ENCODE measurements at regions of chr17 and their contacts with region 1.

Region 1: DNA sequence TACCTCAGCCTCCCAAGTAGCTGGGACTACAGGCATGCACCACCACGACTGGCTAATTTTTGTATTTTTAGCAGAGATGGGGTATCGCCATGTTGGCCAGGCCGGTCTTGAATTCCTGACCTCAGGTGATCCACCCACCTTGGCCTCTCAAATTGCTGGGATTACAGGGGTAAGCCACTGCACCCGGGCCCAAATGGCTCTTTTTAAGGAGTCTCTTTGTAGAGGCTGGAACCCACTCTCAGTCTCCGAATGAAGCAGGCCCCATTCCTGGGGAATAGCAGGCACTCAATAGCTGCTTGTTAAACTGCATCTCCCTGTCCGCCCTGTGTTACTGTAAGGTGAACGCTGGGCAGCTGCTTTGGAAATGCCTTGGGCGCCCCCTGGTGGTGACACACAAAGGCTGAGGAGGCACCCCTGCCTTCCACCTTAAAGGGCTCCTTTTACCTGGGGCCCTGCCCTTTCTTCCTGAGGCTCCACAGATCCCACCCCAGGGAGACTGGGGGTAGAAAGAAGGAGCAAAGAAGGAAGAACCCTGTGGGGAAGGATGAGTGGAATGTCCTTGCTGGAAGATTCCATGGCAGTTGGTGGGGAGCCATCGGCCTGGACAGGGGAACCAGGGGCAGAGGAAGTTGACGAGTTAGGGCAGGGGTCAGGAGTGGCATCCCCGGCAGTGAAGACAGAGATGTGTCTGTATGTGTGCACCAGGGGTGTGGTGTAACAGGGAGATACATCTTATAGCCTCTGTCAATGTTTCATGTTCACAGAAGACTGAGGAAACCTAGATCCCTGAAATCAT is 6.1 kb upstream of the SP2 start:
- DNase-seq: peak; percentile 84 to 88 (median 86)
- H3K4me3 ChIP-seq: no peak overlapping the region
- H3K4me3 Mint-ChIP-seq: peak overlapping the region in 1 of 8 donors; percentile 36
- H3K27ac ChIP-seq: no peak overlapping the region
- H3K27ac Mint-ChIP-seq: peak overlapping the region in 3 of 7 donors; percentile 41 to 64 (median 52)
- H3K4me1 ChIP-seq: peaks cover 19% of the 10 kb centered on the region
- H3K4me1 Mint-ChIP-seq: peaks cover 13 to 27% (median 20%) of the 10 kb centered on the region in 4 donors
- H3K27me3 ChIP-seq: no peaks in the 10 kb centered on the region
- H3K27me3 Mint-ChIP-seq: no peaks in the 10 kb centered on the region

Region 2: GRCh38 chr17:47388825-47389224 is 501.1 kb before region 1 on chr17:
- CTCF ChIA-PET with region 1: no interaction called
- POLR2A ChIA-PET with region 1: no interaction called
- intact Hi-C with region 1: no loop called
- DNase-seq: no peak
- H3K4me3 ChIP-seq: no peak overlapping the region
- H3K4me3 Mint-ChIP-seq: no peak overlapping the region
- H3K27ac ChIP-seq: no peak overlapping the region
- H3K27ac Mint-ChIP-seq: no peak overlapping the region
- H3K4me1 ChIP-seq: no peaks in the 10 kb centered on the region
- H3K4me1 Mint-ChIP-seq: no peaks in the 10 kb centered on the region
- H3K27me3 ChIP-seq: no peaks in the 10 kb centered on the region
- H3K27me3 Mint-ChIP-seq: no peaks in the 10 kb centered on the region

Region 3: DNA sequence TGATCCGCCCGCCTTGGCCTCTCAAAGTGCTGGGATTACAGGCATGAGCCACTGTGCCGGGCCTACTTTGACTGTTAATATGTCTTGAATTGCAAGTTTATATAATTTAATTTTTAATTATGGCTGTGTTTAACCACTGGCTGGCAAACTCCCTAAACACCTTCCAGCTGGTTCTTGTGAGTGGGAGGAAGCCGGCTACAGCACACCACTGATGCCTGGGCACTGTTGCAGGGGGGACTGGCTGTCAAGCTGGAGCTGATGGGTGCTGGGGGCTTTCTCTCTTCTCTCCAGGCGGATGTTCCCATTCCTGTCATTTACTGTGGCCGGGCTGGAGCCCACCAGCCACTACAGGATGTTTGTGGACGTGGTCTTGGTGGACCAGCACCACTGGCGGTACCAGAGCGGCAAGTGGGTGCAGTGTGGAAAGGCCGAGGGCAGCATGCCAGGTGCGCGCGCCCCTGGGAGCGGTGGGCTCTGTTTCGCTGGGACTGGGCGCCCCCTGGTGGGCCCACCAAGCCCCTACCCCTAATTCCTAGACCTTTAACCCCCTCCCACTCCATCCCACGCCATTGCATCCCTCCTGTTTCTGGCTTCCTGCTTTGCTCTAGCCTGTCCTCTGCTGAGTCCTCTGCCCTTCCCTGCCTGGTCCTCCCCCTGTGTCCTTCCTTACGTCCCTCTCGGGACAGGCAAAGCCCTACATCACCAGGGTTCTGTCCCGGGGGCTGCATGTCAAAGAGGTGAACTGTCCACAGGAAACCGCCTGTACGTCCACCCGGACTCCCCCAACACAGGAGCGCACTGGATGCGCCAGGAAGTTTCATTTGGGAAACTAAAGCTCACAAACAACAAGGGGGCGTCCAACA is 147.4 kb before region 1 on chr17:
- CTCF ChIA-PET with region 1: no interaction called
- POLR2A ChIA-PET with region 1: no interaction called
- intact Hi-C with region 1: no loop called
- DNase-seq: peak in 4 of 5 donors; percentile 39 to 48 (median 42)
- H3K4me3 ChIP-seq: no peak overlapping the region
- H3K4me3 Mint-ChIP-seq: peak overlapping the region in 5 of 8 donors; percentile 12 to 80 (median 61)
- H3K27ac ChIP-seq: no peak overlapping the region
- H3K27ac Mint-ChIP-seq: peak overlapping the region in 4 of 7 donors; percentile 17 to 81 (median 60)
- H3K4me1 ChIP-seq: peaks cover 35% of the 10 kb centered on the region
- H3K4me1 Mint-ChIP-seq: peaks cover 18 to 40% (median 28%) of the 10 kb centered on the region in 4 donors
- H3K27me3 ChIP-seq: no peaks in the 10 kb centered on the region
- H3K27me3 Mint-ChIP-seq: no peaks in the 10 kb centered on the region

Region 4: DNA sequence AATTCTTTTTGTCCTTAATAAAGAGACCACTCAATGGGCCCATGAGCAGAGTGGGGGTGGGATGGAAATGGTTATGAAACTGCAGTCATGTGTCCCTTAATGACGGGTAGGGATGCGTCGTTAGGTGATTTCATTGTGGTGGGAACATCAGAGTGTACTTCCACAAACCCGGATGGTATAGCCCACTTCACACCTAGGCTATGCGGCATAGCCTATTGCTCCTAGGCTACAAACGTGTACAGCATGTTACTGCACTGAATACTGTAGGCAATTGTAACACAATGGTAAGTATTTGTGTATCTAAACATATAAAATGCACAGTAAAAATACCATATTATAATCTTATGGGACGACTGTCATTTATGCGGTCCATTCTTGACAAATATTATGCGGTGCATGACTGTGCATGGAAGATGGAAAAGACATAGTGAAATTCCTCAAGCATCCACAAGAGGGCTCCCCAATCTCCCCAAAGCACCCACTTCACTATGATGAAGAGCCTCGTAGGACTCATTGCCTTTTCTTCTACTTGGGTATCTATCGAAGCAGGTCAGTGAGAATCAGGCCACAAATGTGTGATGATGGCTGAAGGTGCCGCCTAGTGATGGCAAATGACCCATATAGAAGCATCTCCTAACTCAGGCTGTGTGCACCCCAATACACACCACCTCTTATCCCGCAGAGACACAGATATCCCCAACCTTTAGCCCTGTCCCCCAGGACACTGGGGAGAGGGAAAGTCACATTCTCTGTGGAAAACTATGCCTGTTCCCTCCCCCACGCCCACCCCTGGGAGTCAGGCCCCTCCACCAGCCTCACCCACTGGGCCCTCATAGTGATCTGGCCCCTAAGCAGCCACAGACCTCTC is 113.4 kb before region 1 on chr17:
- CTCF ChIA-PET with region 1: interaction called, 3 read pairs
- POLR2A ChIA-PET with region 1: no interaction called
- intact Hi-C with region 1: loop called (anchors 1 kb)
- DNase-seq: peak; percentile 46 to 56 (median 48)
- H3K4me3 ChIP-seq: no peak overlapping the region
- H3K4me3 Mint-ChIP-seq: no peak overlapping the region
- H3K27ac ChIP-seq: no peak overlapping the region
- H3K27ac Mint-ChIP-seq: no peak overlapping the region
- H3K4me1 ChIP-seq: no peaks in the 10 kb centered on the region
- H3K4me1 Mint-ChIP-seq: peaks cover 0 to 5% (median 3%) of the 10 kb centered on the region in 4 donors
- H3K27me3 ChIP-seq: peaks cover 23% of the 10 kb centered on the region
- H3K27me3 Mint-ChIP-seq: peaks cover 33 to 35% of the 10 kb centered on the region in 2 donors

Region 5: DNA sequence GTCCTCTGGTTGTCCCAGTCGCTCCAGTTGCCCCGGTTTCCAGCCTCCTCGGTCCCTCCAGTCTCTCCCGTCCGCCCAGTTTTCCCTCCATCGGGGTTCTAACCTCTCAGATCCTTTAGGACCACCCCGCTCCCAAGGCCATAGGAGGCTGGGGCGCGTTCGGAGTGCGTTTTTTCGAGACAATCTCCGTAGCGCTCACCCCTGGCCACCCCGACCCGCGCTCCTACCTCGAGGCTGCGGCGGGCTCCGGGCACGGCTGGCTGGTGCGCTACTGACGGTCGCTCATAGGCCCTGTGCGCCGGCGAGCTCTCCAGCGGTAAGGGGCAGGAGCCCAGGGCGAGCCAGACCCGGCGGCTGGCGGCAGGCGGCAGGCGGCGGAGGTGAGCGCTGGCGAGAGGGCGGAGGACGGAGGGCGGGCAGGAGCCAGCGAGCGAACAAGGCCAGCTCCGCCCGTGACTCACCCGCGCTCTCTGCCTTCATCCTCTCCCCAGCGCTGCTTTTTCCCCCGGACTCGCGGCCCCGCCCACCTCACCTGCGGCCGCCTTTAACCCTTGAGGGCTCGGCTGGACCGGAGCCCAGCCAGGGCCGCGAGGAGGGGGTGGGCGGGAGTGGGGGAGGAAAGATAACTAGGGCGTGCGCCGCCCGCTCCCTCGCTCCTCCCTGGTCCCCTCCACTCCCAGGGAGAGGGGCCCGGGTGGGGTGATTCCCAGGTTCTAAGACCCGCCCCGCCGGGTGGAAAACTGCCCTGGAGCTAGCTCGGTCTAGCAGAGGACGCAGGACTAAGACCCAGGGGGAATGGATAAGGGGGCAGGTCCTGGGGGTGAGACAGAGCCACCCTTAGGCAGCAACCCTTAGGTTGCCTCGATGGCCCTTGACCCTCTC is 39.0 kb before region 1 on chr17 and contains the start of gene SP6:
- CTCF ChIA-PET with region 1: interaction called, 562 read pairs
- POLR2A ChIA-PET with region 1: interaction called, 271 read pairs
- intact Hi-C with region 1: no loop called
- DNase-seq: peak; percentile 39 to 76 (median 45)
- H3K4me3 ChIP-seq: no peak within 1 kb of the TSS
- H3K4me3 Mint-ChIP-seq: peak within 1 kb of the TSS; percentile 5 to 77 (median 60)
- H3K27ac ChIP-seq: no peak within 1 kb of the TSS
- H3K27ac Mint-ChIP-seq: peak within 1 kb of the TSS in 3 of 7 donors; percentile 21 to 56 (median 31)
- H3K4me1 ChIP-seq: peaks cover 37% of the 10 kb centered on the region
- H3K4me1 Mint-ChIP-seq: peaks cover 13 to 38% (median 18%) of the 10 kb centered on the region in 4 donors
- H3K27me3 ChIP-seq: peaks cover 62% of the 10 kb centered on the region
- H3K27me3 Mint-ChIP-seq: peaks cover 57 to 73% of the 10 kb centered on the region in 2 donors
- total RNA-seq, gene SP6: not detected

Region 6: GRCh38 chr17:47862621-47863440 is 27.1 kb before region 1 on chr17:
- CTCF ChIA-PET with region 1: interaction called, 16 read pairs
- POLR2A ChIA-PET with region 1: interaction called, 5 read pairs
- intact Hi-C with region 1: no loop called
- DNase-seq: no peak
- H3K4me3 ChIP-seq: no peak overlapping the region
- H3K4me3 Mint-ChIP-seq: peak overlapping the region in 1 of 8 donors; percentile 11
- H3K27ac ChIP-seq: no peak overlapping the region
- H3K27ac Mint-ChIP-seq: no peak overlapping the region
- H3K4me1 ChIP-seq: peaks cover 18% of the 10 kb centered on the region
- H3K4me1 Mint-ChIP-seq: peaks cover 0 to 18% (median 14%) of the 10 kb centered on the region in 4 donors
- H3K27me3 ChIP-seq: no peaks in the 10 kb centered on the region
- H3K27me3 Mint-ChIP-seq: peaks cover 12 to 20% of the 10 kb centered on the region in 2 donors

Region 7: DNA sequence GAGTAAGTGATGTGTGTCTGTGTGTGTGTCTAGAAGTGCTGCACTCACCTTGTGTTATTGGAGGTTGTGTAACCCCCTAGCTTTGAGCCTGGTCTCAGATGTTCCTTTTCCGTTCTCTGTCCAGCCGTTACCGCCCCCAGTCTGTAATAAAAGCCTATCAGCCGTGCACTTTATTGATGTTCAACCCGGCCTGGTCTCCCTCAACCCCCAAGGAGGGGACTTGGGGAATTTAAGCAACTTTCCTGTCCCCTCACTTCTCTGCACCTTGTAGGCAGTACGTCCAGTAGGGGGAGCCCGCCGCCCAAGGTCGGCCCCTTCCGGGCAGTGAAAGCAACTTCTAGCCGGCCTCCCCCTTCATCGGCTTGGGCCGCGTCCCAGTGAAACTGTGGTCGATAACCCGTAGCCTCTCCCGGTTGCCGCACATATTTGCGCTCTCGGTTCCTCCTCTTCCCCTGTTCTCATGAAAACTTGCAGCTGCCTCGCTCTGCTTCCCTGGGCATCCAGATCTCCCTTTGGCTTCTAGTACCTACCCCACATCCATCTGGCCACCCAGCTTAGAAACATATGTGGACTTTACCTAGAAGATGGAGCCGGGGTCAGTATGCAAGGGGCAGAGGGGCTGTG is 59.3 kb after region 1 on chr17:
- CTCF ChIA-PET with region 1: interaction called, 23 read pairs
- POLR2A ChIA-PET with region 1: interaction called, 6 read pairs
- intact Hi-C with region 1: no loop called
- DNase-seq: peak; percentile 59 to 71 (median 63)
- H3K4me3 ChIP-seq: peak overlapping the region in 1 of 2 donors; percentile 51
- H3K4me3 Mint-ChIP-seq: peak overlapping the region; percentile 61 to 91 (median 74)
- H3K27ac ChIP-seq: peak overlapping the region; percentile 37
- H3K27ac Mint-ChIP-seq: peak overlapping the region; percentile 29 to 93 (median 69)
- H3K4me1 ChIP-seq: peaks cover 34% of the 10 kb centered on the region
- H3K4me1 Mint-ChIP-seq: peaks cover 21 to 36% (median 29%) of the 10 kb centered on the region in 4 donors
- H3K27me3 ChIP-seq: no peaks in the 10 kb centered on the region
- H3K27me3 Mint-ChIP-seq: no peaks in the 10 kb centered on the region

Region 8: GRCh38 chr17:47959825-47960655 is 70.1 kb after region 1 on chr17:
- CTCF ChIA-PET with region 1: no interaction called
- POLR2A ChIA-PET with region 1: no interaction called
- intact Hi-C with region 1: no loop called
- DNase-seq: no peak
- H3K4me3 ChIP-seq: no peak overlapping the region
- H3K4me3 Mint-ChIP-seq: no peak overlapping the region
- H3K27ac ChIP-seq: no peak overlapping the region
- H3K27ac Mint-ChIP-seq: no peak overlapping the region
- H3K4me1 ChIP-seq: no peaks in the 10 kb centered on the region
- H3K4me1 Mint-ChIP-seq: no peaks in the 10 kb centered on the region
- H3K27me3 ChIP-seq: no peaks in the 10 kb centered on the region
- H3K27me3 Mint-ChIP-seq: no peaks in the 10 kb centered on the region

Region 9: GRCh38 chr17:48037036-48037837 is 147.3 kb after region 1 on chr17 and contains the start of gene COPZ2:
- CTCF ChIA-PET with region 1: no interaction called
- POLR2A ChIA-PET with region 1: no interaction called
- intact Hi-C with region 1: no loop called
- DNase-seq: peak; percentile 62 to 74 (median 63)
- H3K4me3 ChIP-seq: peak within 1 kb of the TSS; percentile 23 to 67
- H3K4me3 Mint-ChIP-seq: peak within 1 kb of the TSS; percentile 87 to 95 (median 88)
- H3K27ac ChIP-seq: no peak within 1 kb of the TSS
- H3K27ac Mint-ChIP-seq: peak within 1 kb of the TSS in 6 of 7 donors; percentile 4 to 67 (median 30)
- H3K4me1 ChIP-seq: peaks cover 7% of the 10 kb centered on the region
- H3K4me1 Mint-ChIP-seq: peaks cover 4 to 7% (median 5%) of the 10 kb centered on the region in 4 donors
- H3K27me3 ChIP-seq: no peaks in the 10 kb centered on the region
- H3K27me3 Mint-ChIP-seq: peaks cover 7 to 32% of the 10 kb centered on the region in 2 donors
- total RNA-seq, gene COPZ2: 1.9 to 2.0 TPM